Heart right ventricle (tissue), 16 donors: ENCODE measurements at regions of chr14 and their contacts with region 1.

Region 1: DNA sequence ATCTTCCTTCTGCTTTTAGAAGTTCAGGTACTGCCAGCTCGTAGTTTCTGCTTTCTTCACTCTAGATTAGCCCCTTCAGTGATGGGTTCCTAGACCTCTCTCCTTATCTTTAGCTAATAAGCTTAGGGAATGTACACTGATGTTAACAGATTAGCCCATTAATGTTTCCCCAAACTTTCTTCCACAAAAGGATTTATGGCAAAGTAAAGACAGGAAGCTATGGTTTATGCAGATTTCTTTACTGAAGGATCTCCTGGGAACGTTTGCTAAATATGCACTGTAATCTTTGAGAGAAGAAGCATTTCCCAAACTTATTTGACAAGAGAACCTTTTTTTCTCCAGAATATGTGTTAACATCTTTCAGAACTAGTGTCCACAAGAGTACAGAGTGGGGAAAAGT is 4.2 kb downstream of the SOCS4 start:
- DNase-seq: no peak
- ATAC-seq: no peak
- H3K4me3 ChIP-seq: no peak overlapping the region
- H3K27ac ChIP-seq: peak overlapping the region in 3 of 10 donors; percentile 11 to 36 (median 32)
- H3K4me1 ChIP-seq: peaks cover under 1 to 53% (median 38%) of the 10 kb centered on the region in 9 donors
- H3K27me3 ChIP-seq: no peaks in the 10 kb centered on the region
- CTCF ChIP-seq: no peak

Region 2: GRCh38 chr14:55051426-55052268 is 20.5 kb after region 1 on chr14 and contains the start of gene MAPK1IP1L:
- intact Hi-C with region 1: loop called in 1 of 10 experiments (anchors 2 kb)
- DNase-seq: peak; percentile 92 to 94
- ATAC-seq: peak; percentile 96 to 99 (median 98)
- H3K4me3 ChIP-seq: peak within 1 kb of the TSS; percentile 83 to 100 (median 94)
- H3K27ac ChIP-seq: peak within 1 kb of the TSS; percentile 99 to 100 (median 100)
- H3K4me1 ChIP-seq: peaks cover 0 to 47% (median 41%) of the 10 kb centered on the region in 9 donors
- H3K27me3 ChIP-seq: no peaks in the 10 kb centered on the region
- CTCF ChIP-seq: peak; percentile 99 to 100 (median 100)
- total RNA-seq, gene MAPK1IP1L: 58.6 to 105 (median 78.4) TPM